Head of caudate nucleus (tissue), 42 donors: ENCODE measurements at regions of chr4 and their contacts with region 1.

Region 1: DNA sequence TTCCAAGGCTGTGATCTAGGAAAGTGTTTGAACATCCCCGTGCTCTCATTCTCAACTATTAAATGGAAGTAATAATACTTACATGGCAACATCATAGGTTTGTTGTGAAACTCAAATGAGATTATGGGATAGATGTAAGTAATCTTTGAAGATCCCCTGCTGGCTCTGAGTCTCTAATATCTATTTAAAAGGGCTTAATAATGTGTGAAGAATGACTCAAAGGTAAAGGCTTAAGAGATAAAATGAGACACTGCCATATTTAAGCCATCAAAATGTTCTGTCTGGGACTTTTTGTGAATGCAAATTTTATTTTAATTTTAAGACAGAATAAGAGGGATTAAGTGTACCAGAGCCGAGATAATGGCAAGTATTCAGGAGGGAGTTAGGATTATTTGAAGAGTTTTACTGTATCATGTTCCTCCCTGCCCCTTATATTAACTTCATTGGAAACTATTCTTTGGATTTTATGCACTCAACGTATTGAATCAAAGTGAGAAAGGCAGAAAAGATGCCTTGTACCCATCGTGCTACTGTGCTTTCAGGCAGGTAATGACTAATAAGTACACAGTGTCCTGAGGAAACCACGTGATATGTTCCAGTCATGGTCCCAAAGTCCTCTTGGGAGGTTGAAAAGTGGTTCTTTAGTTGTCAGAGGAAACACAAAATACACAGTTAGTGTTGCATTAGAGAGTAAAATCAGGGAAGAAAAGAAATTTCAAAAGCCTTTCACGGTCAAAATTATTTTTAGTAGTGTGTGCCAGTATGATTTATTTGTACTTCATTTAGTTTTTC is 192.4 kb downstream of the RBM46 start:
- DNase-seq: no peak

Region 2: GRCh38 chr4:155353923-155354540 is 380.6 kb after region 1 on chr4:
- intact Hi-C with region 1: loop called (anchors 10 kb)
- DNase-seq: peak; percentile 27 to 83 (median 64)